Mammary epithelial cell (primary cell): ENCODE measurements at regions of chr2 and their contacts with region 1.

Region 1: GRCh38 chr2:238106686-238107524 is 6.8 kb downstream of the ESPNL start:
- DNase-seq: no peak
- H3K4me3 ChIP-seq: no peak overlapping the region
- H3K27ac ChIP-seq: no peak overlapping the region
- H3K4me1 ChIP-seq: no peaks in the 10 kb centered on the region
- H3K27me3 ChIP-seq: no peaks in the 10 kb centered on the region
- CTCF ChIP-seq: peak; percentile 3 to 24

Region 2: GRCh38 chr2:238160206-238161109 is 53.6 kb after region 1 on chr2:
- CTCF ChIA-PET with region 1: no interaction called
- dilution Hi-C with region 1: loop called (anchors 5 kb)
- in situ Hi-C with region 1: no loop called
- intact Hi-C with region 1: no loop called
- DNase-seq: no peak
- H3K4me3 ChIP-seq: no peak overlapping the region
- H3K27ac ChIP-seq: no peak overlapping the region
- H3K4me1 ChIP-seq: peaks cover 4% of the 10 kb centered on the region
- H3K27me3 ChIP-seq: peaks cover 9% of the 10 kb centered on the region
- CTCF ChIP-seq: peak in 1 of 2 donors; percentile 16